Activated B cell treated with CpG ODN at 0.5 μM for 24 hours (primary cell): ENCODE measurements at regions of chr12 and their contacts with region 1.

Region 1: GRCh38 chr12:109888179-109889020 is 8.1 kb upstream of the GLTP start:
- DNase-seq: no peak
- ATAC-seq: peak; percentile 58
- H3K4me3 Mint-ChIP-seq: peak overlapping the region; percentile 63
- H3K27ac Mint-ChIP-seq: peak overlapping the region; percentile 95
- H3K4me1 Mint-ChIP-seq: peaks cover 54% of the 10 kb centered on the region
- H3K27me3 Mint-ChIP-seq: no peaks in the 10 kb centered on the region
- CTCF ChIP-seq: no peak

Region 2: DNA sequence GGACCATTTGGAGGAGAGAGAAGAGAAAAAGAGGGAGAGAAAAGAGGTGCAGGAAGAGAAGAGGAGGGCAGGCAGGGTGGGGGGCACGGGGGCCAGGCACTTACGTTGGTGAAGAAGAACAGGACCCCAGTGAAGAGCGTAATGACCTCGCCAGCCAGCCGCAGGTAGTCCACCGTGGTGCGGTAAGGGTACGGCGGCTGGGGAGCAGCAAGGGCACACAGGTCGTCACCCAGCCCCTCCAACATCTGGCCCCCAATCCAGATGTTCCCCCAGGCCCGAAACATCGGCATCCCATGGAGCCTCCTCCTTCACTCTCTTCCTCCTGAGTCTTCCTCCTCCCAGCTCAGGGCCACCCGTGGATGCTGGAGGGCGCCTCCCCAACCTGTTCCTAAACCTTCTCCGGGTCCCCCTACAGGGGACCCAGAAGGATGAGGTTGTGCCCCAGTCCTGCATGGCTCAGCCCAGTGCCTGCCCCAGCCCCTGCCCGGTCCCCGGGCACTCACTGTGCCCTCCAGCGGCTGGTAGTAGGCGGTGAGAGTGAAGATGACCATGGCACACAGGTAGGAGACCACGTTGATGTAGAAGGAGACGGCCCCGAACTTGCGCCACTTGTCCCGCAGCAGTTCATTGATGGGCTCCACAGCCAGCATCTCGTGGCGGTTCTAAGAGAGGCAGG is 94.4 kb before region 1 on chr12:
- CTCF ChIA-PET with region 1: no interaction called
- POLR2A ChIA-PET with region 1: no interaction called
- intact Hi-C with region 1: no loop called
- DNase-seq: no peak
- ATAC-seq: no peak
- H3K4me3 Mint-ChIP-seq: no peak overlapping the region
- H3K27ac Mint-ChIP-seq: no peak overlapping the region
- H3K4me1 Mint-ChIP-seq: no peaks in the 10 kb centered on the region
- H3K27me3 Mint-ChIP-seq: peaks cover 9% of the 10 kb centered on the region
- CTCF ChIP-seq: no peak

Region 3: DNA sequence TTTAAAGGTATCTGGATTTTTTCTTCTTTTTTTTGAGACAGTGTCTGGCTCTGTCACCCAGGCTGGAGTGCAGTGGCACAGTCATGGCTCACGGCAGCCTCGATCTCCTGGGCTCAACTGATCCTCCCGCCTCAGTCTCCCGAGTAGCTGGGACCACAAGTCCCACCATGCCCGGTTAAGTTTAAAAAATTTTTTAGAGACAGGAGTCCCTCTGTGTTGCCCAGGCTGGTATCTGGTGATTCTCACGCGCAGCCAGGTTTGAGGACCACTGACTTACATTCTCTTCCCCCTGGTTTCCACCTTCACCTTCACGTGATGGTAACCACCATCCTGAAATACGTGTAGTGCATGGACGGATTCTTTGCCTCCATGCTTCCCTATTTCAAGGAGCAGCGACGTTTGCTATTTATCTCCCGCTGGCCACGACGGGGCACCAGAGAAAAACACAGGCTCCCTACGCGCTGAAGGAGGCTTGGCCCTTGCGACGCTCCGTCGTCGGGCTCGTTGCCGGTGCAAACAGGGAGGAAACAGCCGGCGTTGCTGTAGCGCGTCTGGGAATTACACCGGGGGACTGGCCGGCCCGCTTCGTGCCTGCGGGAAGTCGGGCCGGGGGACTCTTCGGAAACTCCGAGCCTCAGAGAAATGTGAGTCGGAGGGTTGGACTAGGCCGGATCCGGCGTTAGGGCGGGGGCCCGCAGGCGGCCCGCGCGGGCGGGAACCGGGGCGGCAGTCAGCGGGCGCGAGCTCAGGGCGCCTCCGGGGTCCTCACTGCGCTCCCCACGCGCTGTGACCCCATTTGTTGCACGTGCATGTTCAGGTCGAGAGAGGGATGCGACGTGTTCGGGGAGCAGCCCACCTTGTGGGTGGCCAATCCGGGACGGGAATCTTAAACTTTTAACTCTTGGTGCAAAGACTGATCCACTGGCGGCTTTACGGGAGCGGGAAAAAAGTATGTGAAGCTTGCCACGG is 11.7 kb after region 1 on chr12 and contains the start of gene TCHP:
- CTCF ChIA-PET with region 1: interaction called, 4 read pairs
- POLR2A ChIA-PET with region 1: interaction called, 12 read pairs
- intact Hi-C with region 1: loop called (anchors 1 kb)
- DNase-seq: peak; percentile 67
- ATAC-seq: peak; percentile 93
- H3K4me3 Mint-ChIP-seq: peak within 1 kb of the TSS; percentile 99
- H3K27ac Mint-ChIP-seq: peak within 1 kb of the TSS; percentile 96
- H3K4me1 Mint-ChIP-seq: peaks cover 29% of the 10 kb centered on the region
- H3K27me3 Mint-ChIP-seq: no peaks in the 10 kb centered on the region
- CTCF ChIP-seq: no peak
- total RNA-seq, gene TCHP: 26.0 and 28.3 TPM in 2 replicates